ENCODE measurements at regions of chr19 and their contacts with region 1.

Region 1: DNA sequence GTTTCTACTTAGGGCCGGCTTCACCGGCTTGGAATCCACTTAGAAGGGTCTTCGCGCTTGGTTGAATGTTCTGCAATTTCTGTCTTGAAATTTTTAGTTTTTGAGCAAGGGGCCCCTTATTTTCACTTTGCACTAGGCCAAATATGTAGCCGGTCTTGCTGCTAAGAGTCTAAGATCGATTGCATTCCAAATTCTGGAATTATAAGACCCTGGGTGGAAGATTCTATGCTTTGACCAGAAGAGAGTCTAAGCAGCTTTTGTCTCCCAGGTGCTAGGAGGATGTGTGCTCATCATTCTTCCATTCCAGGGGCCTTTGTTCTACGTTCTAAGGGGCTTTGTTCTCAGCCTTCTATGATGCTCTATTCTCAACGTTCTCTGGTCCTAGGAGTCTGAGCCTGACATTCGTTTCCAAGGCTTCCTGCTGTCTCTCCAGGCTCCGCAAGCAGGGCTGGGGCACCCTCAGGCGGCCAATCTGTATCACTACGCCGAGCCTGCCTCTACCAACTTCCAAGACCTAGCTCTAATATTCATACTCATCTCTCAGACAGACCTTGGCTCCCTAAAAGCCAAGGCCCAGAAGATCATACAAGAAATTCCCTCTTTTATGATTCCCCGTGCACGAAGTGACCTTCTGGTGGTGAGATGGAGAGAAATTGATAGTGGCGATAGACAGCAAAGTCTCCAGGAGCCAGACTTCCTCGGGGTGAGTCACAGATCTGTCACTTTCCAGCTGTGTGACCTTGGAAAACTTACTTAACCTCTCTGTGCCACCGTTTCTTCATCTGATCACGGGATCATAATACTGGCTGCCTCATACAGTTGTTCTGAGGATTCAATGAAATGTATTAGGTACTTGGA is 982 bp upstream of the DACT3 start:
- DNase-seq: peak; percentile 91
- ATAC-seq: peak; percentile 79

Region 2: GRCh38 chr19:46614114-46614722 is 47.7 kb before region 1 on chr19:
- intact Hi-C with region 1: loop called (anchors 1 kb)
- DNase-seq: peak; percentile 91
- ATAC-seq: peak; percentile 78

Region 3: GRCh38 chr19:47075179-47075810 is 413.3 kb after region 1 on chr19:
- intact Hi-C with region 1: no loop called
- DNase-seq: peak; percentile 85
- ATAC-seq: no peak